Activated T-helper 2 cell treated with anti-CD3 and anti-CD28 coated beads, Interferon-gamma antibody, Interleukin-2, Interleukin-4, amounts not matched to agents 10 μg/mL and 5 μg/mL and 100 μg/mL, durations not matched to agents 14 hours and 24 hours and 36 hours (primary cell): ENCODE measurements at regions of chr13 and their contacts with region 1.

Region 1: GRCh38 chr13:98910501-98910951 is 67.3 kb downstream of the DOCK9 start:
- DNase-seq: peak; percentile 36
- H3K4me3 Mint-ChIP-seq: peak overlapping the region; percentile 47
- H3K27ac Mint-ChIP-seq: peak overlapping the region; percentile 97
- H3K4me1 Mint-ChIP-seq: peaks cover 32% of the 10 kb centered on the region
- H3K27me3 Mint-ChIP-seq: no peaks in the 10 kb centered on the region

Region 2: DNA sequence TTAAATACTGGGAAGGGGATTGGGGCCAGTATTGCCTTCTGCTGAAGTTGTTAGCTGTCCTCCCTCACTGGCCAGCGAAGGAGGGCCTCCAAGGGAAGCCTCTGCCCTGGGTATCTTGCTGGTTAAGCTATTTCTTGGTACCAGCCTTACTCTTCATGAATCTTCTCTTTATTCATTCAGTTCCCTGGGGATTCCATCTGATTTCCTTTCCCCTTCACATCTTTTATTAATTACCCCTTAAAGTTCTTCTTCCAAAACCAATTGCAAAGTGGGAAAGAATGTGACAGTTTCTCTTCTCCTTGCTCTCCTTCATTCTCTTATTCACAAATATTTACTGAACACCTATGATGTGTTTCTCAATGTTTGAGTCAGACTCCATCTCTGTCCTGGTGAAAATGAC is 296.9 kb before region 1 on chr13:
- intact Hi-C with region 1: no loop called
- DNase-seq: no peak
- H3K4me3 Mint-ChIP-seq: no peak overlapping the region
- H3K27ac Mint-ChIP-seq: no peak overlapping the region
- H3K4me1 Mint-ChIP-seq: no peaks in the 10 kb centered on the region
- H3K27me3 Mint-ChIP-seq: peaks cover 15% of the 10 kb centered on the region

Region 3: DNA sequence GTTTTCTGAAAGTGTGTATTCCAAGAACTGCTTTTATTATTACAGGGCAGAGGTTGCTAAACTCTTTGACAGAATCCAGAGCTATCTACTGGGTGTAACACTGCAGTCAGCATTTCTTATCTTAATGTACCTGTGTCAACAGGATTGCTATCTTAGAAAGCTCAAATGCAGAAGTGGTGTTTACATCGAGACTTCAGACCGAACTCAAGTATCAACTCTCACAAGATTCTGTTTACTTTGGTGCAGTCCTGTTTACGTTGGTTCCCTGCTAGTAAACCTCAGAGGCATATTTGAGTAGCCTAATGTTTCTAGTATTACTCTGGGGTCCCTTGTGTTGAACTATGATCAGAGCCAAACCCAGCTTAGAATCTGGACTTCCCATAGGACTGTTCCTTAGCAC is 178.6 kb before region 1 on chr13:
- intact Hi-C with region 1: no loop called
- DNase-seq: no peak
- H3K4me3 Mint-ChIP-seq: no peak overlapping the region
- H3K27ac Mint-ChIP-seq: no peak overlapping the region
- H3K4me1 Mint-ChIP-seq: no peaks in the 10 kb centered on the region
- H3K27me3 Mint-ChIP-seq: no peaks in the 10 kb centered on the region

Region 4: GRCh38 chr13:98853771-98854221 is 56.7 kb before region 1 on chr13:
- intact Hi-C with region 1: loop called (anchors 2 kb)
- DNase-seq: peak; percentile 64
- H3K4me3 Mint-ChIP-seq: no peak overlapping the region
- H3K27ac Mint-ChIP-seq: peak overlapping the region; percentile 65
- H3K4me1 Mint-ChIP-seq: peaks cover 19% of the 10 kb centered on the region
- H3K27me3 Mint-ChIP-seq: no peaks in the 10 kb centered on the region

Region 5: DNA sequence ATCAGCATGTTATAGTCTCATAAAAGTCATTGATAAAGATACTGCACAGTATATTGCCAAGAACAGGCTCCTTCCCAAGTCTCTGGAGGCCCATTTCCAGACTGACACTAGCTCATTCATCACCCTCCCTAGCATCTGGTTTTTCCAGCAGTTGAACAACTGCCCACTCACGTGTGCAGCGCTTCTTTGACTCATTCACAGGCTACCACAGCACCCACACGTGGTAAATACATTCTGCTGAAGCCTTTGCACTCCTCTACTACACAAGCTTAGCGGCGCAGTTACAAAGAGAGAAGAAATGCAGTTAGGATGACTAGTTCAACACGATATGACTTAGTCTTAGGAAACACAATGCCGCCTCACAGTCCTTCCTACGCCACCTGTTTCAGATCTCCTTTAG is 20.3 kb before region 1 on chr13:
- intact Hi-C with region 1: loop called (anchors 2 kb)
- DNase-seq: no peak
- H3K4me3 Mint-ChIP-seq: no peak overlapping the region
- H3K27ac Mint-ChIP-seq: peak overlapping the region; percentile 17
- H3K4me1 Mint-ChIP-seq: peaks cover 19% of the 10 kb centered on the region
- H3K27me3 Mint-ChIP-seq: no peaks in the 10 kb centered on the region

Region 6: GRCh38 chr13:98994896-98995295 is 84.4 kb after region 1 on chr13:
- intact Hi-C with region 1: no loop called
- DNase-seq: no peak
- H3K4me3 Mint-ChIP-seq: no peak overlapping the region
- H3K27ac Mint-ChIP-seq: no peak overlapping the region
- H3K4me1 Mint-ChIP-seq: peaks cover 54% of the 10 kb centered on the region
- H3K27me3 Mint-ChIP-seq: no peaks in the 10 kb centered on the region

Region 7: GRCh38 chr13:99004978-99005377 is 94.5 kb after region 1 on chr13:
- intact Hi-C with region 1: no loop called
- DNase-seq: no peak
- H3K4me3 Mint-ChIP-seq: no peak overlapping the region
- H3K27ac Mint-ChIP-seq: no peak overlapping the region
- H3K4me1 Mint-ChIP-seq: peaks cover 40% of the 10 kb centered on the region
- H3K27me3 Mint-ChIP-seq: no peaks in the 10 kb centered on the region

Region 8: GRCh38 chr13:99027260-99027659 is 116.7 kb after region 1 on chr13:
- intact Hi-C with region 1: loop called (anchors 1 kb)
- DNase-seq: no peak
- H3K4me3 Mint-ChIP-seq: peak overlapping the region; percentile 48
- H3K27ac Mint-ChIP-seq: peak overlapping the region; percentile 89
- H3K4me1 Mint-ChIP-seq: peaks cover 75% of the 10 kb centered on the region
- H3K27me3 Mint-ChIP-seq: no peaks in the 10 kb centered on the region